RWPE1 (cell line): ENCODE measurements at regions of chr5 and their contacts with region 1.

Region 1: DNA sequence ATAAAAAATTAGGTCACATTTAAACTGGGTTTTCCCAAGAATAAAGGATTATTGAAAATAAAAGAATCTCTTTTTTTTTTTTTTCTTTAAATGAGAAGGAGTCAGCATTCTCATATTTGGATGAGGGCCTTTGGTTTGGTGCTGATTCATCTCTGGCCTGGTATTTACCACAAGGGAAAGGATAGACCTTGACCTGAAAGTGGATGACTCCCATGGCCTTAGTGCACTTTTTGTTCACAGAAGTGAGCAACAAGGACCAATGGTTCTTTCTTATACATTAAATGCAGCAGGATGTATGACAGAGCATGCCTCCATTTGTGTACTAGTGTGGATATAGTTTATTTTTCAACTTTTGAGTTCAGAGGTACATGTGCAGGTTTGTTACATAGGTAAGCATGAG is 6.9 kb downstream of the YTHDC2 start:
- DNase-seq: no peak
- H3K27ac ChIP-seq: no peak overlapping the region
- CTCF ChIP-seq: no peak

Region 2: DNA sequence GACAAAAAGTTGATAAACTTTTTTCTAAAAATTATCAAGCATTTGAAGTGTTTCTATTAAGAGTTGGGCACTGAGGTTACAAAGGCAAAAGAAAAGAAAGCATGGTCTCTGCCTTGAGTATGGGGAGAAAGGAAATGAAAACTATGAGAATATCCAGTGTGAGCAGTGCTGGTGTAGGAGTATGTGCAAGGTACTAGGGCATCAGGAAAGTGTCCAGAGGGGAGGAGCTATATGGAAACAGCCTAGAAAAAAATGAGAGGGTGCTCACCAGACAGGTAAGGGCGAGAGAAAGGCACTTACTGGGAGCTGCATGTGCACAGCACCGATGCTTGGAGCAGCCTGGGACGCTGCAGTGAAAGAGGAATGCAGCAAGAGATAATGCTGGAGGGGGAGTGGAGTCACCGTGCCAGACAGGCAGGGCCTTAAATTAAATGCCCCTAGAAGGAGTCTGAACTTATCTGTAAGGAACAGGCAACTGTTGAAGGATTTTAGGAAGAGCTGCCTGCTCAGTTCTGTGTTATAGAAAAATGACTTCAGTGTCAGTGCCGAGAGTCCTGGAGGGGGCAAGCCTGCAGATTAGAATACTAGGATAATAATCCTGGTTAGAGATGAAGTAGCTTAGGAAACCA is 46.2 kb before region 1 on chr5:
- CTCF ChIA-PET with region 1: interaction called, 10 read pairs
- POLR2A ChIA-PET with region 1: no interaction called
- DNase-seq: no peak
- H3K27ac ChIP-seq: no peak overlapping the region
- CTCF ChIP-seq: no peak